GM12878 (cell line): ENCODE measurements at regions of chr11 and their contacts with region 1.

Region 1: DNA sequence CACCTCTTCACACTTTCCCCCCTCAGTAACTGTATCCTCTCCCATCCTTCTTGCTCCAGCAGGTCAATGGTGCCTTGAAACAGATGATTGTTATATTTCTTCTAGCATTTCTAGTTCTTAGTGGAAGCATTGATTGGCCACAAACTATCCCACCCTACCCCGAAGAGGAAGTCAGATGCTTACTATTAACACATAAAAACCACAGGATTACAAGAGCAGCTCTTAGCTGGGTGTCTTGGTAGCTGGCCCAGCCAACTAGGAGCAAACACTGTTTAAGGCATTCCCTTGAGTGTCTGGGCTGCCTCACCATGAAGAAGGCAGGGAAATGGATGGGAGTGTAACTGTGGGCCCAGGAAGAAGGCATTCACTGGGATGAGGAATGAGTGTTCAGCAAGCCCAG is 176.6 kb downstream of the GRIK4 start:
- DNase-seq: no peak
- ATAC-seq: peak; percentile 52
- H3K4me3 ChIP-seq: no peak overlapping the region
- H3K27ac ChIP-seq: no peak overlapping the region
- H3K4me1 ChIP-seq: no peaks in the 10 kb centered on the region
- H3K27me3 ChIP-seq: no peaks in the 10 kb centered on the region
- CTCF ChIP-seq: no peak
- EP300 ChIP-seq: no peak
- POLR2A ChIP-seq: no peak
- RAD21 ChIP-seq: no peak

Region 2: DNA sequence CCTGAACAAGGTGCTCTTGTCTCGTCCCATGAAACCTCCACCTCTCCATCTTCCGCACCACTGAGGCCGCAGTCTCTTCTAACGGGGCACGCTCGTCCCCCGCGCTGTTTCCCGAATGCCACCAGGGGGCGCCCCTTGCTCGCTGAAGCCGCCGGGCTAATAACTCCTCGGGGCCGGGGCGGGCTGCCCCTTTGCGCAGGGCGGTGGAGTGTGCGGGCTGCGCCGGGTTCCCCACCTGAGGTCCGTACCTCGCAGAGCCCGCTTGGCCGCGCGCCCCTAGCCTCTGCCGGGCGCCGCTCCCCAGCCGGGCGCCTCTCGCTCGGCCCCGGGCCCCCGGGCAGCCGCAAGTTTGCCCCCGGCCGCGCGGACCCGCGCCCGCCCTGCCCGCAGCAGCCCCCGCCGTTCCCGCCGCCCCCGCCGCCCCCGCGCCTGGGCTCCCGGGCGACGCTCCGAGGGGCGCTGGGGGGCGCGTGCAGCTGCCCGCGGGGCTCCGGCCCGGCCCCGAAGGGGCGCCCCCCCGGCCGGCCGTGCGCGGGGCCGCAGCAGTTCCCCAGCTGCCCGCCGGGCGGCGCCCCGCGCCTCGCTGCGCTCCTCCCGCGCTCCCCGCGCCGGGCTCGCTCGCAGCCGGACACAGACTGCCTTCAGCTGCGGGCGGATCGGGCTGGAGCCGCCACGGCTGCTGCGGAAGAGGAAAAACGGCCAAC is 176.9 kb before region 1 on chr11 and contains the start of gene GRIK4:
- CTCF ChIA-PET with region 1: interaction called, 95 read pairs
- POLR2A ChIA-PET with region 1: no interaction called
- RAD21 ChIA-PET with region 1: interaction called, 64 read pairs
- SMC1A ChIA-PET with region 1: interaction called, 32 read pairs
- in situ Hi-C with region 1: loop called (anchors 10 kb)
- intact Hi-C with region 1: loop called (anchors 1 kb)
- DNase-seq: no peak
- ATAC-seq: peak; percentile 95
- H3K4me3 ChIP-seq: peak within 1 kb of the TSS; percentile 16; the same call in 1 of the 2 replicates
- H3K27ac ChIP-seq: no peak within 1 kb of the TSS
- H3K4me1 ChIP-seq: no peaks in the 10 kb centered on the region; the same call in 1 of the 2 replicates
- H3K27me3 ChIP-seq: no peaks in the 10 kb centered on the region
- CTCF ChIP-seq: peak; percentile 88 to 98 (median 92)
- EP300 ChIP-seq: no peak
- POLR2A ChIP-seq: no peak
- RAD21 ChIP-seq: peak; percentile 99
- polyA plus RNA-seq, gene GRIK4: 0.33 to 0.45 TPM

Region 3: GRCh38 chr11:120632579-120632978 is 55.6 kb before region 1 on chr11:
- CTCF ChIA-PET with region 1: interaction called, 36 read pairs
- POLR2A ChIA-PET with region 1: no interaction called
- RAD21 ChIA-PET with region 1: interaction called, 27 read pairs
- SMC1A ChIA-PET with region 1: interaction called, 33 read pairs
- in situ Hi-C with region 1: no loop called
- intact Hi-C with region 1: loop called (anchors 5 kb)
- DNase-seq: no peak
- ATAC-seq: peak; percentile 87
- H3K4me3 ChIP-seq: no peak overlapping the region
- H3K27ac ChIP-seq: no peak overlapping the region
- H3K4me1 ChIP-seq: peaks cover 10% of the 10 kb centered on the region
- H3K27me3 ChIP-seq: no peaks in the 10 kb centered on the region
- CTCF ChIP-seq: peak; percentile 16 to 64 (median 62)
- EP300 ChIP-seq: no peak
- POLR2A ChIP-seq: no peak
- RAD21 ChIP-seq: peak; percentile 60

Region 4: GRCh38 chr11:120674542-120674941 is 13.6 kb before region 1 on chr11:
- CTCF ChIA-PET with region 1: interaction called, 47 read pairs
- POLR2A ChIA-PET with region 1: no interaction called
- RAD21 ChIA-PET with region 1: interaction called, 3 read pairs
- SMC1A ChIA-PET with region 1: interaction called, 18 read pairs
- in situ Hi-C with region 1: no loop called
- intact Hi-C with region 1: no loop called
- DNase-seq: no peak
- ATAC-seq: no peak
- H3K4me3 ChIP-seq: no peak overlapping the region
- H3K27ac ChIP-seq: no peak overlapping the region
- H3K4me1 ChIP-seq: no peaks in the 10 kb centered on the region; the same call in 1 of the 2 replicates
- H3K27me3 ChIP-seq: no peaks in the 10 kb centered on the region
- CTCF ChIP-seq: no peak
- EP300 ChIP-seq: no peak
- POLR2A ChIP-seq: no peak
- RAD21 ChIP-seq: no peak

Region 5: DNA sequence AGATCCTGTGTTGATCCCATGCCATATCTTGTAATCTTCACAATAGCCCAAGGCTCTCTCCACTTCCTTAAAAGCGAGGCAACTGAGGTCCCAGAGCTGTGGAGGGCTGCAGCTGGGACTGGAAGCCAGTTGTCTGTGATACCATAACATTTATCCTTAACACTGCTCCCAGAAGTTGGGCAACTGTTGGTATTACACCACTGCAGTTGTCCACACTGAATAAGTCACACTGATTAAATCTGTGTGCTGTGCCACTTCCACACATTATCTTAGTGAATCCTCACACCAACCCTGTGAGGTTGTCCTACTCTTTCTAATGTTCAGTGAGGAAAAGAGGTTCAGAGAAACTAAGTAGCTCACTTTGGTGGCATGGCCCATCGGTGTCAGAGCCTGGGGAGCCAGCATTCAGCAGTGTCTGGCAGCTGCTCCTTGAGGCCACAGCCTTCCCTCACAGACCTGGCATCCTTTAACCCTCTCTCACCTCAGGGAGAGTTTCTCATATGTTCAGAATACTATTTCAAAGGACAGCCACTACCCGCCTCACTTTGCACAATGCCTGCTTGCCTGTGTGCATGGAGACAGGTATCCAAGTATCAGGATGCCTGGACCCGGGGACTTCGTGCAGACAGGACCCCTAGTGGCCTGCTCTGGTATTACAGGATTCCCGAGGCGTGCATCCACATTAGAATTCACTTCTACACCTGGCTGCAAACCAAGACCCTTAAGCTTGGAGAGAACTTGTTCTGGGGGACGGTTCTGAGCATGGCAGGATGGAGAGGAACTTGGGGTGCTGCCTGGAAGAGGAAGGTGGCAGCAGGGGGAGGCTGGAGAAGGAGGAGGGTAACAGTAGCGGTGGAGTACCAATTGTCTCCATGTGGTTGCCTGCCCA is 113.9 kb after region 1 on chr11:
- CTCF ChIA-PET with region 1: interaction called, 34 read pairs
- POLR2A ChIA-PET with region 1: no interaction called
- RAD21 ChIA-PET with region 1: interaction called, 16 read pairs
- SMC1A ChIA-PET with region 1: interaction called, 18 read pairs
- in situ Hi-C with region 1: no loop called
- intact Hi-C with region 1: loop called (anchors 10 kb)
- DNase-seq: no peak
- ATAC-seq: peak; percentile 80
- H3K4me3 ChIP-seq: no peak overlapping the region
- H3K27ac ChIP-seq: no peak overlapping the region
- H3K4me1 ChIP-seq: no peaks in the 10 kb centered on the region
- H3K27me3 ChIP-seq: no peaks in the 10 kb centered on the region
- CTCF ChIP-seq: peak; percentile 87 to 96 (median 91)
- EP300 ChIP-seq: no peak
- POLR2A ChIP-seq: no peak
- RAD21 ChIP-seq: peak; percentile 72

Region 6: DNA sequence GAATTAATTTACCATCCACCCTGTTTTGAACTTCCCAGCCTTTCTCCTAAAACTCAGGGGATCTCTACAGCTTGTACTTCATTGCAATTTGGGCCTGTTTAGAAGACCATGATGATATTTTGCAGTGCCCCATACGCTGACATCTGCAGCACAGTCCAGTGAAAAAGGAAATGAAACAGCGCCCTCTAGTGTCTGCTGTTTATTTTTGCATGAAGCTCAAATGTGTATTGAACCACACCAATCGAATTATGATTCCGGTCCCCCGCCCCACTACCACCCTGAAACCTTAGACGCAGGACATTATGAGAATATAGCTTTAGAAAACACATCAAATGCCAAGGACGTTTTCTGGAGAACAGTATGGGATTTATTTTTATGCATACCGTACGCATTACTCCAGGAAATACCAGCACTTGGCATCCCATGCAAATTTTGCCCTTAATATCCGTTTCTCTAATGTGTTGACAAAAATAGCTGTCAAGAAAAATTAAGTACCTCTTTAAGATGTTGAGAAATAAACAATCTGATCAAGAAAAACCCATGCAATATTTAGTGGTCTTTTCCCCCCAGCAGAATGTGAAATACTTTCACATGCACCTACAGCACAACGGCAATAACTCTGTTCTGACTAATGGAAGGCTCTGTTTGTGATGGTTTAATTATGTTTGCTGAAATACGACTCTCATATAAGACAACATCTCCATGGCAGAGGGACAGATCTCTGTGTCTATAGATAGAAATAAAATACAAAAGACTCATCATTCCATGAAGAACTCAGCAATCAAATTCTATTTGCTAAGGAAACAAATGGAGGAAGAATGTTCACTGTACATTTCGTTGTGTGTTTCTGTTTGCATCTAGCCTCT is 506.8 kb after region 1 on chr11:
- CTCF ChIA-PET with region 1: interaction called, 14 read pairs
- POLR2A ChIA-PET with region 1: no interaction called
- RAD21 ChIA-PET with region 1: interaction called, 7 read pairs
- SMC1A ChIA-PET with region 1: interaction called, 8 read pairs
- in situ Hi-C with region 1: no loop called
- intact Hi-C with region 1: no loop called
- DNase-seq: peak; percentile 31
- ATAC-seq: peak; percentile 99
- H3K4me3 ChIP-seq: no peak overlapping the region
- H3K27ac ChIP-seq: no peak overlapping the region
- H3K4me1 ChIP-seq: no peaks in the 10 kb centered on the region
- H3K27me3 ChIP-seq: no peaks in the 10 kb centered on the region
- CTCF ChIP-seq: peak; percentile 72 to 84 (median 83)
- EP300 ChIP-seq: no peak
- POLR2A ChIP-seq: no peak
- RAD21 ChIP-seq: peak; percentile 86